ENCODE measurements at regions of chr4 and their contacts with region 1.

Region 1: GRCh38 chr4:1266881-1267763 is 18.2 kb upstream of the CTBP1 start:
- DNase-seq: no peak
- H3K4me3 ChIP-seq: no peak overlapping the region
- H3K27ac ChIP-seq: no peak overlapping the region
- H3K4me1 ChIP-seq: peaks cover 0 to 2% (median 0%) of the 10 kb centered on the region in 4 experiments; a peak in 1 of 7 replicates
- H3K27me3 ChIP-seq: no peaks in the 10 kb centered on the region
- CTCF ChIP-seq: no peak
- EP300 ChIP-seq: no peak
- POLR2A ChIP-seq: no peak
- RAD21 ChIP-seq: no peak

Region 2: DNA sequence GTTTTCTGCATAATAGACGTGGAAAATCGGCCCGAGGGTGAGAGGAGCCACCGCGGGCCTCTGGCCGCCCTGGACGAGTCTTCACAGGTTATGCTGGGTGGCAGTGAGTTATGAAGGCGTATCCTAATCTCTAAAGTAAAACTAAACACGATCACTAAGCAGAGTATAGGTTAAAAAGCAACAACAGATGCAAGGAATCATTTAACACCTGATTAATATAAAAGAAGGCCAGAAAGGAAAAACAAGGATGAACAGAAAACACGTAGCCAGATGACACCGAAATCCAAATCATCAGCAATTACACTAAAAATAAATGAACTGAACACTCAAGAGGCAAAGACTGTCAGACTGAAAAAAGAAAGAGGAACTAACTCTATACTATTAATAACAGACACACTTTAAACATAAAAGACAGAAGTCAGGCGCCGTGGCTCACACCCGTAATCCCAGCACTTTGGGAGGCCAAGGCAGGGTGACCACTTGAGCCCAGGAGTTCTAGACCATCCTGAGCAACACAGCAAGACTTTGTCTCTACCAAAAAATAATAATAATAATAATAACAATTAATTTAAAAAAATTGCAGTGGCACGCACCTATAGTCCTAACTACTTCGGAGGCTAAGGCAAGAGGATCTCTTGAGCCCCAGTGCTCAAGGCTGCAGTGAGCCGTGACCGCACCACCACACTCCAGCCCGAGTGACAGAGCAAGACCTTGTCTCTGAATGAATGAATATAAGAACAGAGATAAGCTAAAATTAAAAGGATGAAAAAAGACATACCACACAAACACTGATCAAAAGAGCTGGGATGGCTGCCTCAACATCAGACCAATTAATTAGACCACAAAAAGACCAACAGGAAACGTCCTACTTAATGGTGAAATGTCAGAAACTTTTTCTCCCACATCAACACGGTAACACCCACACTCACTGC is 48.2 kb before region 1 on chr4:
- CTCF ChIA-PET with region 1: no interaction called
- POLR2A ChIA-PET with region 1: no interaction called
- DNase-seq: no peak
- H3K4me3 ChIP-seq: no peak overlapping the region
- H3K27ac ChIP-seq: no peak overlapping the region
- H3K4me1 ChIP-seq: no peaks in the 10 kb centered on the region
- H3K27me3 ChIP-seq: no peaks in the 10 kb centered on the region
- CTCF ChIP-seq: no peak
- EP300 ChIP-seq: no peak
- POLR2A ChIP-seq: no peak
- RAD21 ChIP-seq: no peak

Region 3: GRCh38 chr4:1233641-1234308 is 33.3 kb before region 1 on chr4:
- CTCF ChIA-PET with region 1: interaction called, 11 read pairs
- POLR2A ChIA-PET with region 1: no interaction called
- DNase-seq: no peak
- H3K4me3 ChIP-seq: no peak overlapping the region
- H3K27ac ChIP-seq: peak overlapping the region; percentile 49; the same call in 1 of the 2 replicates
- H3K4me1 ChIP-seq: no peaks in the 10 kb centered on the region
- H3K27me3 ChIP-seq: no peaks in the 10 kb centered on the region
- CTCF ChIP-seq: no peak
- EP300 ChIP-seq: no peak
- POLR2A ChIP-seq: no peak
- RAD21 ChIP-seq: no peak

Region 4: GRCh38 chr4:1249148-1249730 is 17.9 kb before region 1 on chr4:
- CTCF ChIA-PET with region 1: interaction called, 32 read pairs
- POLR2A ChIA-PET with region 1: interaction called, 4 read pairs
- DNase-seq: peak in 1 of 2 experiments; percentile 78
- H3K4me3 ChIP-seq: peak overlapping the region; percentile 42 to 73 (median 44)
- H3K27ac ChIP-seq: peak overlapping the region; percentile 77; the same call in 1 of the 2 replicates
- H3K4me1 ChIP-seq: peaks cover 0 to 16% (median 11%) of the 10 kb centered on the region in 4 experiments; a peak in 5 of 7 replicates
- H3K27me3 ChIP-seq: peaks cover 0 to 2% (median 0%) of the 10 kb centered on the region in 4 experiments; a peak in 1 of 7 replicates
- CTCF ChIP-seq: no peak
- EP300 ChIP-seq: no peak
- POLR2A ChIP-seq: peak in 1 of 2 experiments; percentile 67; a peak in 2 of 3 replicates
- RAD21 ChIP-seq: no peak

Region 5: DNA sequence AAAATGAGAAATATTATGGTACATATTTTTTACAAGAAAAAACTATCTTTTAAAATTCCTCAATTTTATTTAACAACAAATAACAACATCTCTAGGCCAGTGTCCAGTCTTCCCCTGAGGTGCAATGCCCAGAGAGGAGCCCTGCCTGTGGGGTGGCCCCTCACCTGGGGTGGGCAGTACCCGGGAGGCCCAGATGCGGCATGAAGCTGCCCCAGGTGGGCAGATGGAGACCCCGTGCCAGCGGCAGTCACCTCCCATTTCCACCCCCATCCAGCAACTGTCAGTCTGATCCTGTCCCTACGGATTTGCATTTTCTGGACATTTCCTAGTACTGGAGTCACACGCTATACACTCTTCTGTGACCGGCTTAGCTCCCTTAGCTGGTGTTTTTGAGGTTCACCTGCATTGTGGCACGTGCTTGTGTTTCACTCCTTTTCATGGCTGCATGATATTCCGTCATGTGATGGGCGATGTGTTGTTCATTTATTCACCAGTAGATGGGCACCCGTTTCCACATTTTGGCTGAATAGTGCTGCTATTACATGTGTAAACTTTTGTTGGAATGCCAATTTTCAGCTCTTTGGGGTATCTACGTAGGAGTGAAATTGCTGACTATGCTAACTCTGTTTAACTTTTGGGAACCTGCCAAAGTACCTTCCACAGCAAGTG is 10.7 kb after region 1 on chr4:
- CTCF ChIA-PET with region 1: interaction called, 16 read pairs
- POLR2A ChIA-PET with region 1: no interaction called
- DNase-seq: no peak
- H3K4me3 ChIP-seq: no peak overlapping the region
- H3K27ac ChIP-seq: no peak overlapping the region
- H3K4me1 ChIP-seq: no peaks in the 10 kb centered on the region
- H3K27me3 ChIP-seq: no peaks in the 10 kb centered on the region
- CTCF ChIP-seq: peak in 1 of 3 experiments; percentile 24; a peak in 1 of 4 replicates
- EP300 ChIP-seq: no peak
- POLR2A ChIP-seq: no peak
- RAD21 ChIP-seq: no peak; a peak in 1 of 4 replicates

Region 6: DNA sequence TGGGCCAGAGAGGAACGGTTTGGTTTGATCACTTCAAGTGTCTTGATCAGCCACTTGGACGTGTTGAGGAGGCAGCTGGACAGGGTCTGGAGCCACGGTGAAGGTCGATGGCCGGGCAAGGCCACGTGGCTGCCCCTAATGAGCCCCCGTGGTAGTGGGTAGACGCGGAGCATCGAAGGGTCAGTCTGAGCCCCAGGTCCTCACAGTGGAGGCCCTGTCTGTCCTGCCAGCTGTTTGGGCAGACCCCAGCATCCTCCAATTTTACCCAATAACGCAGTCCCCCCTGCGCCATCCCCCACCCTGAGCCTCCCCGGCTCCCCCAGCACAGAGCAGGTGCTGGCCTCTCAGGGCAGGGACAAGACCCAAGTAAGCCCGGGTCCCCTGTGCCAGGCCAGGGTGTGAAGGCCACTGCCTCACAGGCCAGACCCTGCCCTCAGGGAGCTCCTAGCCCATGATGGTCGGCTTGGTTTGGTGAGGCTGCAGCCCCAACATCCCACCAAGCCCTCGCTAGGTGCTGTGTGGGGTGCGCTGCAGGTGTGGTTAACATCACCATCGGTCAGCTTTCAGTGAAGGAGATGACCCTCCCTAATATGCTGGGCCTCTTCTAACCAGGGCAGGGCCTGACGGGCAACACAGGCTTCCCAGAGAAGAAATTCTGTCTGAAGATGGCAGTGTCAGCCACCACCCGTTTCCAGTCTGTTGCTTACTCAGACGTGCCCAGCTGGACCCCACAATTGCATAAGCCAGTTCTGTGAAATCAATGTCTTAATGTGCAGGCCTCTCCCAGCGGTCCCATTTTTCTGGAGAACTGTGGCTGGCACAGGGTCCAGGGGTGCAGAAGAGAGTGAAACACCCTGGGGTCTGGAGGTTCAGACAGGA is 179.6 kb after region 1 on chr4:
- CTCF ChIA-PET with region 1: no interaction called
- POLR2A ChIA-PET with region 1: no interaction called
- DNase-seq: no peak
- H3K4me3 ChIP-seq: no peak overlapping the region
- H3K27ac ChIP-seq: no peak overlapping the region
- H3K4me1 ChIP-seq: no peaks in the 10 kb centered on the region
- H3K27me3 ChIP-seq: no peaks in the 10 kb centered on the region
- CTCF ChIP-seq: no peak
- EP300 ChIP-seq: no peak
- POLR2A ChIP-seq: no peak
- RAD21 ChIP-seq: no peak